Activated CD4-positive, alpha-beta T cell treated with anti-CD3 and anti-CD28 coated beads for 36 hours (primary cell): ENCODE measurements at regions of chr18 and their contacts with region 1.

Region 1: DNA sequence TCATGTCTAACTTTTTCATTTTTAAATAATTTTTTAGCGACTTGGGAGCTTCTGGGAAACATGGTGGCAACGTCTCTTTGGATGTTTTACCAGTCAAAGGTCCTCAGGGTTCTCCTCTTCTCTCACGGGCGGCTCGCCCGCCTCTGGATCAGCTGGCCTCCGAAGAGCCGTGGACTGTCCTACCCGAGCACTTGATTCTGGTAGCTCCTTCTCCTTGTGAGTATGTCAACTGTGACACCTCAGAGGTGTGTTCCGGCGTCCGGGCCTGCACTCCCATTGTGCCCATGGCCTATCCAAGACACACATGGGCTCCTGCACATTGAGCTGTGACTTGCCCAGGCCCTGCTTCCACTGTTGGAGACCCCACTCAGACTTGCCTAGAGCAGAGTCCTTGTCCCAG is 104.3 kb downstream of the CEP192 start:
- DNase-seq: no peak
- ATAC-seq: no peak
- H3K4me3 Mint-ChIP-seq: no peak overlapping the region
- H3K27ac Mint-ChIP-seq: no peak overlapping the region
- H3K4me1 Mint-ChIP-seq: no peaks in the 10 kb centered on the region
- H3K27me3 Mint-ChIP-seq: no peaks in the 10 kb centered on the region

Region 2: DNA sequence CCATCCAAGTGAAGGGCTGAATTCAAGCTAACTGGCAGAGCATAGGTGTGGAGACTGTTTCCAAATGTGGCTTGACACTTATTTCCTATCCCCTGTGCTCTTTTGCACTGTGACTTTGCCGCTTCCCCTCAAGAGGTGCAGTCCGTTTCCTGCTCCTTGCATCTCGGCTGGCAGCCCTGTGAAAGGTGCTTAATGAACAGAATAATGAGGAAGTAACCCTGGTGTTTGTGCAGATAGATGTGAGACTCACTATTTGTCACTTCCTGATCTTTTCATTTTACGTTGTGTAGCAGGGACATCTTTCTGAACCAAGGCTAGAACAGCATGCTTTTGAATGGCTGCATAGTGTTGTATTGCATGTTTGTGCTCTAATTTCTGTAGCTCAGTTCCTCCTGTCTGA is 43.5 kb before region 1 on chr18:
- CTCF ChIA-PET with region 1: no interaction called
- POLR2A ChIA-PET with region 1: no interaction called
- intact Hi-C with region 1: loop called in 1 of 2 experiments (anchors 5 kb)
- DNase-seq: peak; percentile 14
- ATAC-seq: peak; percentile 62
- H3K4me3 Mint-ChIP-seq: no peak overlapping the region
- H3K27ac Mint-ChIP-seq: peak overlapping the region; percentile 51
- H3K4me1 Mint-ChIP-seq: peaks cover 22% of the 10 kb centered on the region
- H3K27me3 Mint-ChIP-seq: no peaks in the 10 kb centered on the region